Heart right ventricle (tissue), 16 donors: ENCODE measurements at regions of chr9 and their contacts with region 1.

Region 1: DNA sequence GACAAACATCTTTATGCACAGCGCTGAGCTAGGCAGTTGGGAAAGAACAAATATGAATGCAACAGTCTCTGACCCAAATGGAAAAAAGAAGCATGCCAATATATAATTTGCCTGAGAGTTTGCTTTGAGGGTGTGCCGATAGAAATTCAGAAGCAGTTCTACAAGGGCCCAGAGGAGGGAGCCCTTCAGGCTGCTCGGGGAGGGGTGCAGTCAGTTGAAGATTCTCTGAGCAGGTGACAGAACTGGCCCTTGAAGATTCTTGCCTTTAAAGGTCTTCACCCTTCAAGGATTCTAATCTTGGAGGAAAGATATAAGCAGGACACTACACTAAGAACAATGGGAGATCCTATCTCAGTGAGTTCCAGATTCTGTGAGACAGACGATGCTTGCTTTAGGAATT is 3.7 kb upstream of the PAPPA start:
- DNase-seq: no peak
- ATAC-seq: peak in 2 of 8 donors; percentile 24 to 47
- H3K4me3 ChIP-seq: no peak overlapping the region
- H3K27ac ChIP-seq: no peak overlapping the region
- H3K4me1 ChIP-seq: peaks cover 0 to 13% (median 0%) of the 10 kb centered on the region in 9 donors
- H3K27me3 ChIP-seq: peaks cover 0 to 37% (median 6%) of the 10 kb centered on the region in 7 donors
- CTCF ChIP-seq: peak; percentile 36 to 72 (median 60)

Region 2: DNA sequence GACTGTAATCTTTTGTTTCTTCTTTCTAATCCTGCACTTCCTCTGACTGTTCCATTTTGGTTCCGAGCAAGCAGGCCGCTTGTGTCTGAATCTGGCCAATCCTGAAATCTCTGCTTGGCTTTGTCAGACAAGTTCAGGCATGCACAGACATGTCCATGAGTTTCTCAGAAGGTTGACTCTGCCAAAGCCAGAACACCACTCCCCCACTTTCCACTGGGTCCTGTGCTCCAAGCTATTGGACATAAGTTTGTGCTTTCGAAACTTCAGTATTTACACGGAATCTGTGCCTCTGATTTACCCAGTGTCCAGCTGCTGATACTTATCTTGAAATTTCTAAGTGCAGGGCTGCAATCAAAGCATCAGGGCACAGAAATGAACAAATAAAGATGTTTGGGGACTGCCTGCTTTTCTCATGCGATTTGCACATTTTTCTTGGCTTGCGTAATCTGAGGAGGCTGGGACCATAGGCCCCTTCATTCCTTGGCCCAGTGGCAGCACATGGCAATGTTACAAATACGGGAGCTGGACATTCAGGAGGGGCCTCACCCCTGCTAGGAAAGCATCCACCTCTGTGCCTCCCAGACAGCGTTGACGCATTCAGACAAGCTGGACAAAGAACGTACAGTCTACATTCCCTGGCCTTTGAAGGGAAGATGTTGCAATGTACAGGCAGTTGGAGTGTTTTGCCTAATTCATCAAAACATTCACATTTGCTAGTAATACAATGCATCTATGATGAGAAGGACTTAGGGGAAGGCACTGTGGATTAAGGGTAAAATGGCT is 205.5 kb before region 1 on chr9:
- intact Hi-C with region 1: loop called in 2 of 10 experiments (anchors 10 kb)
- DNase-seq: peak; percentile 59 to 62
- ATAC-seq: peak; percentile 85 to 98 (median 94)
- H3K4me3 ChIP-seq: no peak overlapping the region
- H3K27ac ChIP-seq: peak overlapping the region; percentile 66 to 87 (median 79)
- H3K4me1 ChIP-seq: peaks cover 5 to 39% (median 19%) of the 10 kb centered on the region in 9 donors
- H3K27me3 ChIP-seq: no peaks in the 10 kb centered on the region
- CTCF ChIP-seq: no peak

Region 3: DNA sequence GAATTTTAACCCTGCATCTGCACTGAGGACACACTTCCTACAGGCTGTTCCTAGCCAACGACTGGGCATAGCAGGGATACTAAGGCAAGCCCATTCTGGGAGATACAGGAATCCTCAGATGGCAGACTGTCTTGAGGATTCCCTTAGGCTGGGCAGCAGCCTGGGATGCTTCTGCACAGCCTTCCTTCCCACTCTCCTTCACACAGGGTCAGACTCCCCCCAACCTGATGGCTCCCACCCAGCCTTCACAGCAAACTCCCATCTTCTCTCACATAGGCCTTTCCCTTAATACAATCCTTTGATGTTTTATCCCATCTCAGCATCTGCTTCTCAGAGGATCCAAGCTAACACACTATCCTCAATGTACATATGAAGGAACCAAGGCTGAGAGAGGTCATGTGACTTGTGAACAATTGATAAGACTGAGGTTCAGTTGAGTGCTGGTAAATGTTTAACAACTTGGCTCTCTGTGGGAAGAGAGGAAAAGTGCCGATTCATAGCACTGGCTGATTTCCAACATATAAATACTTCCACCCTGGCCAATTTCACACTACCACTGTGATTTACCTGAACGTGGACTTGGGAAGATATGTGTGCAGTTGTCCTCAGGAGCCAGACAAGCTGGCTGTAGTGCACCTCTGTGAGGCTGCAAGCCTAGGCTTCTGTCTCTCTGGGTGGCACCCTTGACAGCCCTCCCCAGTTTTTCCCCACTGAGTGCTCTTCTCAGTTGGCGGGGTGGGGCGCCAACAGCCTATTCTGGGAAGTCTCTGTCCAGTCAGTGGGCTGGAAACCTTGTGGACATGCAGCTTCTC is 417.0 kb after region 1 on chr9:
- intact Hi-C with region 1: loop called in 8 of 10 experiments (anchors 1 to 10 kb)
- DNase-seq: no peak
- ATAC-seq: no peak
- H3K4me3 ChIP-seq: no peak overlapping the region
- H3K27ac ChIP-seq: peak overlapping the region in 1 of 10 donors; percentile 7
- H3K4me1 ChIP-seq: peaks cover 0 to 15% (median 7%) of the 10 kb centered on the region in 9 donors
- H3K27me3 ChIP-seq: no peaks in the 10 kb centered on the region
- CTCF ChIP-seq: no peak

Region 4: DNA sequence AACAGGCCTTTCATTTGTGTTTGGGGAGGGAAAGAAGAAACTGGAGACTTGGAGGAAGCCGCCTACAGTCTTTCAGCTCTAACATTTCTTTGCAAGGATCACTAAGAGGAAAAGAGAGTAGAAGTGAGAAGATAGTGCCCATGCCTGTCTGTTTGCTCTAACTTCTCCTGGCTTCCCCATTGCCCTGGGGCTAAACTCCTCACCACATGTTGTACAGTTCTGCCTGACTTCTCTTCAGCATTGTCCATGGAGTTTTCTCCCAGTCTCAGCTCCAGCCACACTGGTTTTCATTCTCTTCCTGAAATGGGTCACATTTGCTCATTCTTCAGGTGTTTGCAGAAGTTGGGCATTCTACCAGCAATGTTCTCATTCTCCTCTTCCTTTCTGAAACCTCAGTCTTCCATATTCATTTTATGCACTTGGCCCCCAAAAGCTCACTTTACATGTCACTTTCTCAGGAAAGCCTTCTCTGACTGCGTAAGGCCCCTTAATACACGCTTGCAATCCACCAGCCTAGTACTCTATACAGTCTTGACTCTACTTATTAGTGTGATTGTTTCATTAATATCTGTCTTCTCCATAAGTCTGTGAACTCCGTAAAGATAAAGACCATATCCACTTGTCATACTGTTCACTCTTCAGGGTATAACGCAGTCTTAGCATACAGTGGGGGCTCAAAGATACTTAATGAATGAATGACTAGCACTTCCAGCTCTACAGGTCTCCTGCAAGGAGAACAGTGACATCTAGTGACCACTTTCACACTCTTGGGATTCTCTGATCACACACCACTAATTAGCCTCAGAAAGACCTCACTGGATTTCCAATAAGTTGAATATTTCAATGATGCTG is 497.0 kb after region 1 on chr9:
- intact Hi-C with region 1: loop called in 6 of 10 experiments (anchors 5 to 10 kb)
- DNase-seq: no peak
- ATAC-seq: peak; percentile 65 to 86 (median 76)
- H3K4me3 ChIP-seq: no peak overlapping the region
- H3K27ac ChIP-seq: peak overlapping the region in 3 of 10 donors; percentile 4 to 53 (median 29)
- H3K4me1 ChIP-seq: peaks cover 0 to 35% (median 14%) of the 10 kb centered on the region in 9 donors
- H3K27me3 ChIP-seq: no peaks in the 10 kb centered on the region
- CTCF ChIP-seq: peak in 8 of 9 donors; percentile 29 to 71 (median 62)